ENCODE measurements at regions of chr11 and their contacts with region 1.

Region 1: DNA sequence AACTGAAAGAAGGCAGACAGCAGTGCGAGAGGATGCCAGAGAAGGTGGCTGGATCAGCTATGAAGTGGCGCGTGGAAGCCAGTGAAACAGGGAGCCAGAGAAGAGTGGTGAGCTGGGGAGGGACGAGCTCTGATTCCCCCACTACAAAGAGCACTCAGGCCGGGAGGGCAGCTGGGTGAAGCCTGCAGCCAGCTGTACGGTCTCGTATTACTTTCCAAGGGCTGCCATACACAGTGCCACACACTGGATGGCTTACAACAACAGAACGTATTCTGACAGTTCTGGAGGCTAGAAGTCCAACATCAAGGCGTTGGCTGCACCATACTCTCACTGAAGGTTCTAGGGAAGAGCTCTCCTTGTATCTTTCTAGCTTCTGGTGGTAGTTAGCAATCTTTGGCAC is 47.1 kb upstream of the WNT11 start:
- DNase-seq: no peak
- H3K4me3 ChIP-seq: no peak overlapping the region
- H3K27ac ChIP-seq: no peak overlapping the region
- H3K4me1 ChIP-seq: no peaks in the 10 kb centered on the region
- H3K27me3 ChIP-seq: peaks cover 0 to 1% (median 0%) of the 10 kb centered on the region in 5 experiments

Region 2: DNA sequence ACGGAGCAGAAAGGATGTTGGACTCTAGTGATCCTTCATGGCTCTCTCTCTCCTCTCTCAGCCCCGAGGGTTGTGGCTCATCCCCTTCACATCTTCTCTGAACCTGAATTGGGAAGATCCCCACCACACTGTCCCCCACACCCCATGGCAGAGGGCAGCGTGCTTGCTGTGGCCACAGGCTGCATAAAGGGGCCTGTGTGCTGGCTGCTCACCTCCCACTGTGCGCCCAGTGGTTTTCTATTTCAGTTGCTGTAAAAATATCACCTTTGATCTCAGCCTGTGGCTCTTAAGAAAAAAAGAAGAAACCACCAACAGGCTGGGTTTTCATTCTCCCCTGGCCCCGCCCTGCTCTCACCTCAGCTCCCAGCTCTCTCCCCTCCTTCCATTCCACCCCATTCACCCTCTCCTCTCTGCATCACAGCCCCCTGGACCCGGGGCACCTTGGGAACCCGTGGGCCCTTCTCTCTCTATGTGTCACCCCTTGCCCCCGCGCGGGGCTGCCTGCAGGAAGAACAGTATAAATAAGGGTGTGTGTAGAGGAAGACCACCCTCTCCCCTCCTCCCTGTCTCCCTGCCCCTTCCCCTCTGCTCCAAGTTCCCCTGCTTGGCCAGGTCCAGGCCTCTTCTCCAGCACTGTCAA is 21.3 kb before region 1 on chr11:
- CTCF ChIA-PET with region 1: no interaction called
- POLR2A ChIA-PET with region 1: no interaction called
- DNase-seq: no peak
- H3K4me3 ChIP-seq: no peak overlapping the region
- H3K27ac ChIP-seq: no peak overlapping the region
- H3K4me1 ChIP-seq: peaks cover 0 to 22% (median 19%) of the 10 kb centered on the region in 4 experiments
- H3K27me3 ChIP-seq: no peaks in the 10 kb centered on the region

Region 3: DNA sequence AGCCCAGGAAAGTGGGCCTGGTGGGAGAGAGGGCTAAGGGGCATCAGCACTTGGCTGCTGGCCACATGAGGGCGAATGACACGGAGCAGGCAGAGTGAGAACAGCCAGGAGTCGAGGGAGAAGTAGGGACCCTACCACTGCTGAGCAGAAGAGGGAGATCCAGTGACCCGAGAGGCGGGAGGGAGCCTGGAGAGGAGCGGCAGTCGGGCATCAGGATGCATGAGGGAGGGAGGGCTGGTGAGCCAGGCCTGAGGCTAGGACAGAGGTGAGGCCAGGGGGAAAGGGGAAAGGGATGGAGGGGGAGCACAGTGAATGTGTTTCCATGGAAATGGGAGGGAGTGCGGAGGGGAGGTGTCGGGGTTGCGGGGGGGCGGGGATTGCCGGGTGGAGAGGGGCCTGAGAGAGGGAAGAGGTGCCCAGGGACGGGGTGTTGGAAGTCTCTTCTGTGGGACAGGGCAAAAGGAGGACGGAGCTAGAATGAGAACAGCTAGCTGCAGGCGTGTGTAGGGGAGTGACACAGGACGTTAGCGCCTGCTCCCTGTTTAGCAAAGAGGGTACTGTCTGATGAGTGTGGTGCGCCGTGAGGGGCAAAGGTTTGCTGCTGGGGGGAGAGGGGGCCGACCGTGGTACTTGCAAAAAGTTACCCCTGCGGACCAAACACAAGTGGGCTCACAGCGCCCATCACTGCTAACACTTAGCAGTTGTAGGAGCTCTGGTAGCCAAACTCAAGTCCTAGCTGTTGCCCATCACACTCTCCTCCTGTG is 10.0 kb before region 1 on chr11:
- CTCF ChIA-PET with region 1: interaction called, 13 read pairs
- POLR2A ChIA-PET with region 1: no interaction called
- DNase-seq: no peak
- H3K4me3 ChIP-seq: no peak overlapping the region
- H3K27ac ChIP-seq: no peak overlapping the region
- H3K4me1 ChIP-seq: peaks cover 0 to 4% (median 0%) of the 10 kb centered on the region in 4 experiments
- H3K27me3 ChIP-seq: no peaks in the 10 kb centered on the region